ENCODE measurements at regions of chr7 and their contacts with region 1.

Region 1: GRCh38 chr7:81161458-81162075 is 242.7 kb upstream of the SEMA3C start:
- DNase-seq: peak; percentile 24 to 61
- ATAC-seq: peak; percentile 89
- H3K4me3 ChIP-seq: no peak overlapping the region
- H3K27ac ChIP-seq: no peak overlapping the region
- H3K4me1 ChIP-seq: no peaks in the 10 kb centered on the region
- H3K27me3 ChIP-seq: no peaks in the 10 kb centered on the region
- CTCF ChIP-seq: no peak
- POLR2A ChIP-seq: no peak

Region 2: DNA sequence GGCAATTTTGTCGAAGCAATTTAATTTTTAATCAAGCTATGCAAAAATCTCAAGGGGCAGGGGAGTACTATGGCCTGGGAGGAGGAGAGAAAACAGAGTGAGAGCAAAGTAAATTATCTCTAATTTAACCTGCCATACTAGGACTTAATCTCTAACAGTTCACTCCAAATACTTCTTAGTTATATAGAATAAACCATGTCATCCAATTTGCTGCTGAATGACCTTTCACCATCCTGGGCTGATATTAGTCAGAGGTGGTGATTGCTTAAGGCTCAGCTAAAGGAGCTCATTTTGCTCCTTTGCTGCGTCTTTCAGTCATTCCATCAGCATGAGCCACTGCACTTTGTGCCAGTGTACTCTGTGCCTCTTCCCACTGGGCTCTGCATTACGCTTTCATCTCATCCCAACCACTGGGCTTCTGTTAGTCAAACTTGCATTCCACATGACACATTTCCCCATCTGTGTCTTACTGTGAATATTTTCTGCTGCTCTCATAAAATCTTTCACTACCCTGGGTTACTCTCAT is 438.9 kb before region 1 on chr7:
- in situ Hi-C with region 1: no loop called
- intact Hi-C with region 1: loop called (anchors 10 kb)
- DNase-seq: peak; percentile 59 to 77
- ATAC-seq: peak; percentile 87 to 91
- H3K4me3 ChIP-seq: no peak overlapping the region
- H3K27ac ChIP-seq: peak overlapping the region in 2 of 4 donors; percentile 45 to 54
- H3K4me1 ChIP-seq: peaks cover 0 to 4% of the 10 kb centered on the region in 2 donors
- H3K27me3 ChIP-seq: no peaks in the 10 kb centered on the region
- CTCF ChIP-seq: no peak
- POLR2A ChIP-seq: no peak

Measured in gastrocnemius medialis (tissue), 4 donors.